ENCODE measurements at regions of chr3 and their contacts with region 1.

Region 1: DNA sequence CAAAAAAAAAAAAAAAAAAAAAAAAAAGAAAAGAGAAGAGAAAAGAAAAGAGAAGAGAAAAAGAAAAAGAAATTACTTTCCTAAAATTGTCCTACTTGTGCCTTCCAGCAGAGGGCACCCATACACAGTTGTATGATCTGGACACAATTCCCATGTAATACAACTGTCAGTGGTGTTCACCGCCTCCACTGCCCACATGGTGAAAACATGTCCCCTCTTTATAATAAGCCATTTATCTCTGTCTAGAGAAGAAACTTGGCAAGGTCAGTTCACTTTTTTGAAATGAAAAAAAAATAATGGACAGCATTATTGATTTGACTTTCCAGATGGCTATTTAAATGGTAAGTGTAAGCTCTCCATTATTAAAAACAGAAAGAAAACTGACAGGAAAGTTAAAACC is 459.4 kb downstream of the GBE1 start:
- DNase-seq: peak in 1 of 5 donors; percentile 12
- ATAC-seq: peak in 3 of 4 donors; percentile 48 to 72 (median 63)
- H3K4me3 ChIP-seq: no peak overlapping the region
- H3K27ac ChIP-seq: no peak overlapping the region
- H3K4me1 ChIP-seq: no peaks in the 10 kb centered on the region
- H3K27me3 ChIP-seq: no peaks in the 10 kb centered on the region
- CTCF ChIP-seq: peak; percentile 39 to 71 (median 58)
- POLR2A ChIP-seq: no peak

Region 2: DNA sequence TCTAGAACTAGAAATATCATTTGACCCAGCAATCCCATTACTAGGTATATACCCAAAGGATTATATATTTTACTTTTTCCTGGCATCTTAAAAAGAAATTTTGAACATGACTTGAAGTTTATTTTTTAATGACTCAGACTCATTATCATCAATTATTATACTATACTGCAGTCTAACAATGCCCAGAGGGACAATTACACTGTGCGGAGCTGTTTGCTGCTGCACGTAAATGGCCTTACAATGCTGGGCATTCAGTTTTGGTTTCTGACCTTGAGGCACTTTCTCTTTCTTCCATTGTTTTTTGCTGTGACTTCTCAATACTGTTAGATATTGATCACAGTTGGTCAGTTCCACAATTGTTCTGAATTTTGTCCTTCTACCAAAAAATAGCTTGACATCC is 330.6 kb after region 1 on chr3:
- intact Hi-C with region 1: loop called in 1 of 10 experiments (anchors 10 kb)
- DNase-seq: no peak
- ATAC-seq: no peak
- H3K4me3 ChIP-seq: no peak overlapping the region
- H3K27ac ChIP-seq: no peak overlapping the region
- H3K4me1 ChIP-seq: no peaks in the 10 kb centered on the region
- H3K27me3 ChIP-seq: no peaks in the 10 kb centered on the region
- CTCF ChIP-seq: no peak
- POLR2A ChIP-seq: no peak

Measured in heart left ventricle (tissue), 16 donors.